CD4-positive, alpha-beta memory T cell (primary cell): ENCODE measurements at regions of chr1 and their contacts with region 1.

Region 1: DNA sequence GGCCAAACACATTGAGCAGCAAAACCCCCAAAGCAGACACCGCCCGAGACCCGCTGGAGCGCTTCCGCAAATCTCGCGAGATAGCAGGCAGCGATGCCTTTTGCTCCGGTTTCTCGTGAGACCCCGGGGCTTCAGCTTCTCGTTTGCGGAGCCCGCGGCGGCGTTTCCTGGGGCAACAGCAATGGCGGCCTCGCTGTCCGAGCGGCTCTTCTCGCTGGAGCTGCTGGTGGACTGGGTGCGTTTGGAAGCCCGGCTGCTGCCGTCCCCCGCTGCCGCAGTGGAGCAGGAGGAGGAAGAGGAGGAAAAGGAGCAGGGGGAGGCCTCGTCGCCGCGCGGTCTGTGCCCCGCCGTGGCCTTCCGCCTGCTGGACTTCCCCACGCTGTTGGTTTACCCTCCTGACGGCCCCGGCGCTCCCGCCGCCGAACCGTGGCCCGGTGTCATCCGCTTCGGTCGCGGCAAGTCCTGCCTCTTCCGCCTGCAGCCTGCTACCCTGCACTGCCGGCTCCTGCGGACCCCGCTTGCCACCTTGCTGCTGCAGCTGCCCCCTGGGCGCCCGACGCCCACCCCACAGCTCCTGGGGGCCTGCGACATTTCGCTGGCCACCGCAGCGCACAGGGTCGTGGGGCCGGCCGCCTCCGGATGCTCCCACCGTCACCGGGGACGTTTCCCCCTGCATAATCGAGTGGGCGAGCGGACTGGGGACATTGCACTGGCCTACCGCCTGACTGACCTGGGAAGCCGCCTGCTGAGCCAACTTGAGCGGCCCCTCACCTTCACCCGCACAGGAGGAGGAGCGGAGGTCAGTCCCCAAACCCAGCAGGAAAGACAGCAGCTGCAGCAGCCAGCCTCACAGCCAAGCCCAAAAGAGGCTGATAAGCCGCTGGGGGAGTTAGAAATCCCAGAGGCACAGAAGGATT is at the start of gene MAP10:
- DNase-seq: peak; percentile 58 to 73 (median 71)
- H3K4me3 ChIP-seq: peak within 1 kb of the TSS; percentile 77 to 83
- H3K4me3 Mint-ChIP-seq: peak within 1 kb of the TSS; percentile 87 to 95 (median 89)
- H3K27ac ChIP-seq: peak within 1 kb of the TSS; percentile 48
- H3K27ac Mint-ChIP-seq: peak within 1 kb of the TSS; percentile 41 to 92 (median 87)
- H3K4me1 ChIP-seq: peaks cover 15% of the 10 kb centered on the region
- H3K4me1 Mint-ChIP-seq: peaks cover 17 to 29% (median 22%) of the 10 kb centered on the region in 4 donors
- H3K27me3 ChIP-seq: no peaks in the 10 kb centered on the region
- H3K27me3 Mint-ChIP-seq: peaks cover 0 to 1% of the 10 kb centered on the region in 2 donors
- total RNA-seq, gene MAP10: 2.7 to 3.1 TPM

Region 2: GRCh38 chr1:232751393-232752140 is 54.0 kb before region 1 on chr1:
- CTCF ChIA-PET with region 1: no interaction called
- POLR2A ChIA-PET with region 1: no interaction called
- intact Hi-C with region 1: no loop called
- DNase-seq: no peak
- H3K4me3 ChIP-seq: no peak overlapping the region
- H3K4me3 Mint-ChIP-seq: no peak overlapping the region
- H3K27ac ChIP-seq: no peak overlapping the region
- H3K27ac Mint-ChIP-seq: no peak overlapping the region
- H3K4me1 ChIP-seq: no peaks in the 10 kb centered on the region
- H3K4me1 Mint-ChIP-seq: peaks cover 0 to 3% (median 0%) of the 10 kb centered on the region in 4 donors
- H3K27me3 ChIP-seq: no peaks in the 10 kb centered on the region
- H3K27me3 Mint-ChIP-seq: peaks cover 0 to 4% of the 10 kb centered on the region in 2 donors

Region 3: GRCh38 chr1:232923739-232924386 is 118.3 kb after region 1 on chr1:
- CTCF ChIA-PET with region 1: no interaction called
- POLR2A ChIA-PET with region 1: interaction called, 11 read pairs
- intact Hi-C with region 1: no loop called
- DNase-seq: peak; percentile 69 to 88 (median 81)
- H3K4me3 ChIP-seq: no peak overlapping the region
- H3K4me3 Mint-ChIP-seq: peak overlapping the region; percentile 59 to 81 (median 78)
- H3K27ac ChIP-seq: peak overlapping the region; percentile 14
- H3K27ac Mint-ChIP-seq: peak overlapping the region; percentile 86 to 96 (median 93)
- H3K4me1 ChIP-seq: peaks cover 49% of the 10 kb centered on the region
- H3K4me1 Mint-ChIP-seq: peaks cover 25 to 46% (median 38%) of the 10 kb centered on the region in 4 donors
- H3K27me3 ChIP-seq: no peaks in the 10 kb centered on the region
- H3K27me3 Mint-ChIP-seq: no peaks in the 10 kb centered on the region